ENCODE measurements at regions of chr1 and their contacts with region 1.

Region 1: GRCh38 chr1:204207136-204207616 is 6.6 kb downstream of the GOLT1A start:
- DNase-seq: peak; percentile 90
- H3K4me3 ChIP-seq: no peak overlapping the region
- H3K27ac ChIP-seq: no peak overlapping the region
- H3K4me1 ChIP-seq: peaks cover 0 to 7% (median 2%) of the 10 kb centered on the region in 6 donors
- H3K27me3 ChIP-seq: peaks cover 0 to 51% (median 0%) of the 10 kb centered on the region in 7 donors
- CTCF ChIP-seq: peak in 10 of 11 experiments; percentile 48 to 92 (median 84)
- POLR2A ChIP-seq: no peak

Region 2: GRCh38 chr1:203985044-203985443 is 222.1 kb before region 1 on chr1:
- intact Hi-C with region 1: no loop called
- DNase-seq: no peak
- H3K4me3 ChIP-seq: no peak overlapping the region
- H3K27ac ChIP-seq: no peak overlapping the region
- H3K4me1 ChIP-seq: no peaks in the 10 kb centered on the region
- H3K27me3 ChIP-seq: no peaks in the 10 kb centered on the region
- CTCF ChIP-seq: no peak
- POLR2A ChIP-seq: no peak

Region 3: DNA sequence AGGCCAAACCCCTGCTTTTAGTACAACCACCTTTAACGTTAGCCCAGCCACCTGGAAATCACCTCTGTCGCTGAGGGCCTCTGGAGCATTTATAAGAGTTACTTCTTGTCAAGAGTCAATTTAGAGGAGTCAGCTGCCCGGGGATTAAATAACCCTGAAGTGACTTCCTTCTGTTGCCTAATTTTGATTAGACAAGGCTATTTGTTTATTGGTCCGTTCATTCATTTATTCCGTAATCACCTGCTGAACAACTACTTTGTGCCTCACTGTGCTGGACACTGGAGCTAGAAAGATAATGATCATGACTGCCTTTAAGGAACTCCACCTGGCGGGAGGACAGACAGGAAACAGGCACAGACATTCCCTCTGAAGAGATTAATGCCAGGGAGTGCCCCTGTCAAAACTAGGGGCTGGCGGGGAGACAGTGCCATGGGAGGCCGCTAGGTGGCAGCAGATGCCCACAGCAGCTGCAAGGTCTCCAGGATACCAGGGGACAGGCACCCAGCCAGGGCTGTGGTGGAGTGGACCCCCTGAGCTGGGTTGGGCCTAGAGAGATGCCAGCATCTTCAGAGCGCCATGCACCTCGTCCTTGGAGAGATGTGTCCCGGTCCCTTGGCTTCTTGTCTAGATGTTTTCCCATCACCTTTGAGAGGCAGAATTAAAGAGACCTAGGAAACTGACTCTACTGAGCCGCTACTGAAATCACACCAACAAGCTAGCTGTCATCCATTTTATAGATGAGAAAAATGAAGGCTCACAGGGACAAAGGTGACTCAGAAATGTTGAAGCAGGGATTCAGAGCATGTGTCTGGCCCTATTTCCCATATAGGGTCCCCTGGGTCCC is 44.7 kb before region 1 on chr1:
- intact Hi-C with region 1: loop called (anchors 5 kb)
- DNase-seq: peak; percentile 93
- H3K4me3 ChIP-seq: no peak overlapping the region
- H3K27ac ChIP-seq: no peak overlapping the region
- H3K4me1 ChIP-seq: peaks cover 0 to 12% (median 3%) of the 10 kb centered on the region in 6 donors
- H3K27me3 ChIP-seq: peaks cover 0 to 38% (median 0%) of the 10 kb centered on the region in 7 donors
- CTCF ChIP-seq: peak; percentile 88 to 99 (median 98)
- POLR2A ChIP-seq: no peak